Head of caudate nucleus (tissue), 42 donors: ENCODE measurements at regions of chr4 and their contacts with region 1.

Region 1: DNA sequence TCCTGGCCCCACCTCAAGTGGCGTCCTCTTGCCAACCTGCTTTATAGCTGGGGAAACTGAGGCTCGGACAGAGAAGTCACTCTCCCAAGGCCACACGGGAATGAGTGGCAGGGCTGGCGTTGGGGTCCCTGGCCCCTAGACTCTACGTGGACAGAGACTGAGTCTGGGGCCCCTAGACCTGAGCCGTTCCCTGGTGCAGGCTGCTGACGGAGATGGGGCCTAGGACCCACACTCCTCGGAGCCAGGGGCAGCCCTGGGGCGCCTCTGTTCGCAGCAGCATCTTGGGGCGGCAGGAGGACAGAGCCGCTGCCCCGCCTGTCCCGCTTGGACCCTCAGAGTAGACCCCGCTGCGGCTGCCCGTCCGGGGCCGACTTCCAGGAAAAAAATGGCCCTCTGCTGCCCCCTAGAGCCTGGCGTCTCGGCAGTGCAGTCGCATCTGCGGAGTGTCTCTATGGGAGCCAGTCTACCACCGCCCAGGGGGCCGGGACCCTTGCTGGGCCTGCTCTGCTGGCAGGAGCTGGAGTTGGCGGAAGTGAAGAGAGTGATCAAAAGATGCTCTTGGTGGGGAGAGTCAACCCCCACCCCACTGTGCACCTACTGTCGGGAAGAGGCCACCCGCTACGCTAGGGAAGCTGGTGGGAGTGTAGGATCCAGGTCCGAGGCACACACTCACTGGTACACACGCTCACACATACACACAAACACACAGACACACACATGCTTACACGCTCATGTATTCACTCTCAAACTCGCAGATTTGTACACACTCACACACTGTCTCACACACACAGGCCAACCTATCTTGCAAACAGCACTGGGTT is 220.1 kb downstream of the AFAP1 start:
- DNase-seq: peak; percentile 38 to 90 (median 78)

Region 2: DNA sequence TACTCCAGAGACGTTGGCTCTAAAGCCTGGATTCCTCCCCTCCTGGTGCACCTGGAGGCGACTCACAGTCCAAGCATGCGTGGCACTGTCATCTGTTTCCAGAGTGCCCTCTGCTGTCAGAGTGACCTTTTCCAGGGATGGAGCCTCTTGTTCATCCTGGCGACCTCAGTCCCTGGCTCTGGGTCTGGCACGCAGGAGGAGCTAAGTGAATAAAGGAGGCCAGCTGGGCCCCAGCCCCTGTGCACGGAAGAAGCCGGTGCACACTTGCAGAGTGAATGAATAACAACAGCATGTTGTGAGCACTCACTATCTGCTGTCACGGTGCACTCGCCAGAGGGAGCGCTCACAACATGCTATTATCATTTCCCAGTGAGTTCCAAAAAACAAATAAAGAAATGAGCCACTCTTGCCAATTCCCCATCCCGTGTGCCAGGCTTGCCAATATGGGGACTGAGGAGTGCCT is 257.0 kb before region 1 on chr4:
- intact Hi-C with region 1: loop called (anchors 5 kb)
- DNase-seq: peak in 37 of 42 donors; percentile 29 to 78 (median 60)